A673 (cell line): ENCODE measurements at regions of chr6 and their contacts with region 1.

Region 1: DNA sequence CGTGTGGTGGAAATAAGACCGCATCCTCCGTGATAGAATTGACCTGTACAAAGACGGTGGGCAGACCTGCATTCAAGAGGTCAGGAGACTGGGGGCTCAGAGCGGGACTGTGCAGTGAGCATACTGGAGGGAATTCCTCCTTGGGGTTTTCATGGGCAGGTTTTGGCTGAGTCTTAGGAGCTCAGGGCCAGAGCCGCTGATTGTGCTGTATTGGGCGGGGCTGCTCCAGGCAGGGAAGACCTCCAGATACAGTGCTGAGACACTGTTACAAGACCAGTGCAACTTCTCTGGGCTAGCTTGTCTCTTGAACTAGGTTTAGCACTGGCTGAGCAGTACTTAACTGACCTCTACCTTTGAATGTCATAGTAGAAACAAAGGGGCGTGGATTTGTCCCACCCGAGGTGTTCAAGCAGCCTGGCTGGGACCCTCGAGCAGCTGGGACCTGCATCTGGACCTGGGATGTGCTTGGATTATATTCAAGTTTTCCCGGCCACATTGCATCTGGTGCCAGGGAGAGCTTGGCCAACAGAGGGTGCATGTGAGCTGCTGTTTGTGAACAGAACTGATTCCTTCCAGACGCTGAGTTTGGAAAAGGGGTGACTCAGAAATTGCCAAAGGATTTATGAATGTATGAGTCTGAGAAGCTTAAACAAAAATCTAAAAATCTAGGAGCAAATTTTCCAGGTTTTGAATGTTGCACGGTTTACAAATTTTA is 33.4 kb upstream of the SLC22A1 start:
- DNase-seq: peak; percentile 52
- H3K4me3 ChIP-seq: no peak overlapping the region
- H3K27ac ChIP-seq: no peak overlapping the region
- H3K4me1 ChIP-seq: no peaks in the 10 kb centered on the region
- H3K27me3 ChIP-seq: no peaks in the 10 kb centered on the region
- CTCF ChIP-seq: peak; percentile 68

Region 2: DNA sequence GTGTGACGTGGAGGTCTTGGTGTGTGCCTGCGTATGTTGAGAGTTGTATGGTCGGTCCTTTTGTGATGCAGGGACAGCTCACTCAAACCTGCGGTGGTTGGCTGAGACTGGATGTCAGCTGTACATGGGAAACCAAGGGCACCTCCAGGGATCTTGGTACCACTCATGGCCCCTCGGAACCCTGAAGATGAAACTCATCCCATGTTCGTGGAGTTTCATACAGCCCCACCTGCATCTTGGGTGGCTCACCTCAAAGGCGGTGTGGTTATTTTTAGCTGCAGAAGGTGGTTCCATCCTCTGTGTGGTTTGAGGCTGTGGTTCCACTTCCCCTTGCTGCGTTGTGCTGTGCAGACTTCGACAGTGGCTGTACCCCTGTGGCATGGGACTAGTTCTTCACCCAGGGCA is 19.2 kb before region 1 on chr6:
- CTCF ChIA-PET with region 1: no interaction called
- POLR2A ChIA-PET with region 1: interaction called, 19 read pairs
- intact Hi-C with region 1: no loop called
- DNase-seq: no peak
- H3K4me3 ChIP-seq: no peak overlapping the region
- H3K27ac ChIP-seq: no peak overlapping the region
- H3K4me1 ChIP-seq: no peaks in the 10 kb centered on the region
- H3K27me3 ChIP-seq: no peaks in the 10 kb centered on the region
- CTCF ChIP-seq: no peak

Region 3: GRCh38 chr6:160160450-160160849 is 72.2 kb after region 1 on chr6:
- CTCF ChIA-PET with region 1: no interaction called
- POLR2A ChIA-PET with region 1: no interaction called
- intact Hi-C with region 1: no loop called
- DNase-seq: peak; percentile 17
- H3K4me3 ChIP-seq: no peak overlapping the region
- H3K27ac ChIP-seq: no peak overlapping the region
- H3K4me1 ChIP-seq: no peaks in the 10 kb centered on the region
- H3K27me3 ChIP-seq: no peaks in the 10 kb centered on the region
- CTCF ChIP-seq: no peak